ENCODE measurements at regions of chr14 and their contacts with region 1.

Region 1: DNA sequence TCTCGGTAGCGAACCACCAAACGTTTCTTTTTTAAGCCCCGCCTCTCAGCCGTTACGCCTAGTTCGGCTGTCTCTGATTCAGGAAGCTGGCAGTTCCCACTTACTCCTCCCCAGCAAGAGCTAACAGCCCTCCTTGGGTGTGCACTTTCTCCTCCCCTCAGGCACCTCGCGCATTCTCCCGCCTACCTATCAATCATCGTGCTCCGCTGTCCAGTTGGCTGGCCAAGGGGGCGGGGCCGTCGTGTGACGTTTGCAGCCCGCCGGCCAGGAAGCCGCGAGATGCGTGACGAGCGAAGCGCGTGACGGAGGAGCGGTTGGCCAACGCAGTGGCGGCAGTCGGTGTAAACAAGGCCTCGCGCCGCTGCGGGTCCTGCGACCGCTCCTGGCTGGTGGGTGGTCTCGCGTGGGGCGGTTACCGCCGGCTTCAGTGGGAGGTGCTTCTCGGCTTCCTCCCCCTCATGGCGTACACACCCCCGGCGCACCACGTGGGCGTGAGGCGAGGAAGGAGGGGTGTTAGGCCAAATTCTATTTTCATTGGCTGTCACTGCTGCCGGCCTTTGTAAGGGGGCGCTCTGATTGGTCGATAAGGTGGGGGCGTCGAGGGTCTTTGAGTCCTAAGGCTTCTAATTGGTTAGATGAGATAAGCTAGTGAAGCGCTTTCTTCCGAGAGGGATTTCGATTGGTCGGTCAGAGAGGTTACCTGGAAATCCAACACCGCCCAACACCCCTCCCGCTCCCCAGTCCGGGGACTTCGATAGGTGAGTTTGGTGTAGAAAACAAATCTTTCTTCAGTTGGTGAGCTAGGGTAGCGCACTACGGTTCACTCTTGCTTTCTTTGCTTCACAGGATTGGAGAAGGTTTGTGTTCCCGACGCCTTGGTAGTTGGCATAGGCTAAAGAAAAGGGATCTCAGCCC is at the starts of genes DCAF11 and NRL:
- H3K4me3 ChIP-seq: peak within 1 kb of the TSS; percentile 98
- H3K27ac ChIP-seq: peak within 1 kb of the TSS; percentile 94
- H3K4me1 ChIP-seq: no peaks in the 10 kb centered on the region
- CTCF ChIP-seq: no peak

Region 2: GRCh38 chr14:24141097-24141880 is 26.5 kb after region 1 on chr14 and contains the start of gene EMC9:
- CTCF ChIA-PET with region 1: interaction called, 6 read pairs
- POLR2A ChIA-PET with region 1: interaction called, 163 read pairs
- H3K4me3 ChIP-seq: peak within 1 kb of the TSS; percentile 90
- H3K27ac ChIP-seq: peak within 1 kb of the TSS; percentile 89
- H3K4me1 ChIP-seq: peaks cover 8% of the 10 kb centered on the region
- CTCF ChIP-seq: peak; percentile 78

Region 3: GRCh38 chr14:24146978-24147760 is 32.4 kb after region 1 on chr14 and contains the start of gene RNF31:
- CTCF ChIA-PET with region 1: no interaction called
- POLR2A ChIA-PET with region 1: interaction called, 60 read pairs
- H3K4me3 ChIP-seq: peak within 1 kb of the TSS; percentile 91
- H3K27ac ChIP-seq: peak within 1 kb of the TSS; percentile 81; the same call in 1 of the 2 replicates
- H3K4me1 ChIP-seq: peaks cover 8% of the 10 kb centered on the region
- CTCF ChIP-seq: no peak

Region 4: DNA sequence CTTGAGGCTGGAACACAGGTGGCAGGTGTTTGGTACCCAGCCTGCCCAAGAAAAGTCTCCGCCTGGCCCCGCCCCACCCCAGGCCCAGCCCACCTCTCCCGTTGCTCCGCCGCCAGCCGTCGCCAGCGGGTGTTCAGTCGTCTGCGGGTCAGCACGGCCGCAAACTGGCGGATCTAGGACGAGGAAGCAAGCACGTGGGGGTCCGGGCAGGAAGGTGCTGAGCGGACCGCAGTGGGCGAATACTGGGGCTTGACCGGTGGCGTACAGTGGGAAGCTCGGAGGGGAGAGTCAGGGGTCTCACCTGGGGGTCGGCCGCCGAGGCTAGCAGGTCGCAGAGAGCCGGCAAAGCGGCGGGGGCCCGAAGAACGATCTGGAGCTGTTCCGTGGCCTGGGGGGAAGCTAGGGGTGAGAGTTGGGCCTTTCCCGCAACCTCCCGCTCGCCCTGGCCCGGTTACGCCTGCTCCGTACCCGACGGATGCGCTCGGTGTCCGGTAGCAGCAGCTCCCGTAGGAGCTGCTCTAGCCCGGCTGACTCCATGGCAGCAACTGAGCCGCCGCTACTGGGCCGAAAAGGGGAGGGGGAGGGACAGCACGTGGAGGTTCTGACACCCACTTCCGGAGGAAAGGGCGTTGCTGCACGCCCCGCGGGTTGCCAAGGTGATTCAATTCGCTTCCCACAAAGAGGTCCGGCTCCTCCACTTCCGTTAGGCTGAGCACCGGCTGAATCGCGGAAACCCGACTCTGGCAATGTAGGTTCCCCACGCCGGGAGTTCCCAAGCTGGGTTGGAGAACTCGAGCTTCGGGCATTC is 73.7 kb after region 1 on chr14 and contains the start of gene IPO4:
- CTCF ChIA-PET with region 1: interaction called, 3 read pairs
- POLR2A ChIA-PET with region 1: interaction called, 12 read pairs
- H3K4me3 ChIP-seq: peak within 1 kb of the TSS; percentile 84
- H3K27ac ChIP-seq: peak within 1 kb of the TSS; percentile 87
- H3K4me1 ChIP-seq: peaks cover 7% of the 10 kb centered on the region; the same call in 1 of the 2 replicates
- CTCF ChIP-seq: no peak; the same call in 1 of the 2 replicates

Region 5: DNA sequence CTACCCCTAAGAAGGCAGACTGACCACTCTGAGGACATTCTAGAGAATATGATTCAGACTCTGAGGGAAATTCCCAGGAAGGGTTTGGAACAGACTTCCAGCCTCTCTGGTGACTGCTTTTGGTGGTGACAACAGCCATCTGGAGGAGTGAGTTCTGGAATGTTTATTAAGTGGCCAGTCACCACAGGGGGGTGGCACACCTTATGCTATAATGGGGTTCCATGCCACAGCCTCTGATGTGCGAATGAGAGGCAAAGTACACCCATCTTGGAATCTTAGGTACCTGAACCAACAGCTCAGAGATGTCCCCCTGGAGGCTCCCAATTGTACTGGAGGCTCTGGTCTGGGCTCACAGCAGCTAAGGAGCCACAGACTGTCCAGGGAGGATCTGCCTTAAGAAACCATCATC is 137.1 kb after region 1 on chr14:
- CTCF ChIA-PET with region 1: no interaction called
- POLR2A ChIA-PET with region 1: no interaction called
- H3K4me3 ChIP-seq: no peak overlapping the region
- H3K27ac ChIP-seq: no peak overlapping the region
- H3K4me1 ChIP-seq: no peaks in the 10 kb centered on the region
- CTCF ChIP-seq: no peak

Region 6: GRCh38 chr14:24299255-24300195 is 184.7 kb after region 1 on chr14 and contains the starts of genes DHRS1 and NOP9:
- CTCF ChIA-PET with region 1: no interaction called
- POLR2A ChIA-PET with region 1: no interaction called
- H3K4me3 ChIP-seq: peak within 1 kb of the TSS; percentile 85
- H3K27ac ChIP-seq: peak within 1 kb of the TSS; percentile 71
- H3K4me1 ChIP-seq: peaks cover 12% of the 10 kb centered on the region
- CTCF ChIP-seq: no peak

Measured in HEK293 (cell line).